Spleen (tissue), 13 donors: ENCODE measurements at regions of chr5 and their contacts with region 1.

Region 1: DNA sequence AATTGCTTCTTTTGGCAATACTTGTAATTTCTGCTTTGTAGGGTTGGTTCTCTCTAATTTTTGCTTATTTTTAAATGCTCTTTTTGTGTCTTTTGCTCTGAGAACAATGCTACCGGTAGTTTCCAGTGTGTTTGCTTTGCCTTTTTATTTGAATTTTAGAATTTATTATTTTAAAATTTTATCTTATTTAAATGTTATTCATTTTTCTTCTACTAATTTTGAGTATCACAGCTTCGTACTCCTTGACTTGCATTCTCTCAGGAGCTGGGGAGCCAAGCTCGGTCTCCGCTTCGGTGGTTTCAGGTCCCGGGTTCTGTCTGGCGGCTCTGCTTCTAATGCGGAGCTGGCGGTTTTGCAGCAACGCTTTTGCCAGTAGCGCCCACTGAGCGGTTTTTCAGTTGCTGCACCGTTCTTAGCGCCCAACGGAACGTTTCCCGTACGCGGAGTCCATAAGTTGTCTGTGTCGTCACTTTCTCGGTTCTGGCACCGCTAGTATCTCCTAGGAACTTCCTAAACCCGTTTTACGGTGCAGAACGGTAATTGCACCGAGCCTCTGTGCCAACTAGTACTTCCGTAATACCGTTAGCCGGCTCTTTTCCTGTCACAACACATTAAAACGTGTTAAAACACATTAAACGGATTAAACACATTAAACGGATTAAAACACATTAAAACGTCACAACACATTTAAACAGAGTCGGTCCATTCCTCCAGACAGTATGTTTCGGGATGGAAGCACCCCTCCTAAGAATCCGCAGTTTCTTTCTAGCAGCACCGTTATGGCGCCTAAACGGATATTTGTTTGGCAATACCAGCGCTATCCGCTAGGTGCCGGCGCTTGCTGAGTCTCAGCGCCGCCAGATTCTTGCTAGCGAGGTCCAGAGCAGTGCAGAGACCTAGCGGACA is 45.6 kb downstream of the ANXA2R start:
- DNase-seq: peak; percentile 96
- H3K4me3 ChIP-seq: peak overlapping the region; percentile 45 to 71 (median 62)
- H3K27ac ChIP-seq: peak overlapping the region; percentile 97 to 100 (median 100)
- H3K4me1 ChIP-seq: peaks cover 4 to 52% (median 30%) of the 10 kb centered on the region in 6 donors
- H3K27me3 ChIP-seq: peaks cover 0 to 6% (median 0%) of the 10 kb centered on the region in 7 donors
- CTCF ChIP-seq: peak; percentile 68 to 97 (median 92)
- POLR2A ChIP-seq: peak in 2 of 3 donors; percentile 24 to 58

Region 2: DNA sequence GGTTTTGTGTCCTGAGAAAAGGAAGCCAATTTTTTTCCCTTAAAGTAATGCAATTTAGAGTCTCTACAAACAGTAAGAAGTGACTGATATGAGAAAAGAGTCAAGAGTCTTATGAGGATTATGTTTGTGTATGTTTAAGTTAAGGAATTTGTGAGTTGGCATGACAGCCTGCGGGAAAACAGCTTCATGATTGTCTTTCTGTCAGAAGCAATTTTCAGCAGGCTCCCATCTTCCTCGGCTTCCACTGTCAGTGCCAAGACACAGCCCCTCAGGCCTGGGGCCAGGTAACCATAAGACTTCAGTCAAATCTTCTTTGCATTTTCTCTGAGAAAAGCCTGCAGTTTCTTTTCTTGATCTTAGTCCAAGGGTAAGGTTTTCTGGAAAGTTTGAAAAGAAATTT is 165.8 kb before region 1 on chr5:
- intact Hi-C with region 1: no loop called
- DNase-seq: no peak
- H3K4me3 ChIP-seq: no peak overlapping the region
- H3K27ac ChIP-seq: no peak overlapping the region
- H3K4me1 ChIP-seq: peaks cover 0 to 4% (median 0%) of the 10 kb centered on the region in 6 donors
- H3K27me3 ChIP-seq: no peaks in the 10 kb centered on the region
- CTCF ChIP-seq: no peak
- POLR2A ChIP-seq: no peak

Region 3: GRCh38 chr5:43040287-43041098 is 46.0 kb after region 1 on chr5 and contains the start of gene ANXA2R:
- intact Hi-C with region 1: loop called (anchors 2 kb)
- DNase-seq: peak; percentile 97
- H3K4me3 ChIP-seq: peak within 1 kb of the TSS; percentile 42 to 85 (median 54)
- H3K27ac ChIP-seq: peak within 1 kb of the TSS; percentile 96 to 99 (median 98)
- H3K4me1 ChIP-seq: peaks cover 0 to 75% (median 52%) of the 10 kb centered on the region in 6 donors
- H3K27me3 ChIP-seq: no peaks in the 10 kb centered on the region
- CTCF ChIP-seq: peak; percentile 60 to 98 (median 93)
- POLR2A ChIP-seq: peak in 1 of 3 donors; percentile 56
- total RNA-seq, gene ANXA2R: 10.0 to 27.2 (median 16.4) TPM

Region 4: GRCh38 chr5:43802119-43802518 is 807.6 kb after region 1 on chr5:
- intact Hi-C with region 1: no loop called
- DNase-seq: no peak
- H3K4me3 ChIP-seq: no peak overlapping the region
- H3K27ac ChIP-seq: no peak overlapping the region
- H3K4me1 ChIP-seq: no peaks in the 10 kb centered on the region
- H3K27me3 ChIP-seq: no peaks in the 10 kb centered on the region
- CTCF ChIP-seq: no peak
- POLR2A ChIP-seq: no peak

Region 5: GRCh38 chr5:44189255-44189654 is 1194.8 kb after region 1 on chr5:
- intact Hi-C with region 1: no loop called
- DNase-seq: no peak
- H3K4me3 ChIP-seq: no peak overlapping the region
- H3K27ac ChIP-seq: no peak overlapping the region
- H3K4me1 ChIP-seq: no peaks in the 10 kb centered on the region
- H3K27me3 ChIP-seq: no peaks in the 10 kb centered on the region
- CTCF ChIP-seq: no peak
- POLR2A ChIP-seq: no peak